Heart right ventricle (tissue), 16 donors: ENCODE measurements at regions of chrX and their contacts with region 1.

Region 1: GRCh38 chrX:41333744-41334259 is at the start of gene DDX3X:
- DNase-seq: peak; percentile 82
- ATAC-seq: peak; percentile 83 to 92 (median 89)
- H3K4me3 ChIP-seq: peak within 1 kb of the TSS; percentile 77 to 100 (median 94)
- H3K27ac ChIP-seq: peak within 1 kb of the TSS; percentile 98 to 100 (median 100)
- H3K4me1 ChIP-seq: peaks cover 0 to 61% (median 27%) of the 10 kb centered on the region in 9 donors
- H3K27me3 ChIP-seq: no peaks in the 10 kb centered on the region
- CTCF ChIP-seq: peak in 5 of 9 donors; percentile 8 to 27 (median 20)
- total RNA-seq, gene DDX3X: 143 to 247 (median 162) TPM

Region 2: DNA sequence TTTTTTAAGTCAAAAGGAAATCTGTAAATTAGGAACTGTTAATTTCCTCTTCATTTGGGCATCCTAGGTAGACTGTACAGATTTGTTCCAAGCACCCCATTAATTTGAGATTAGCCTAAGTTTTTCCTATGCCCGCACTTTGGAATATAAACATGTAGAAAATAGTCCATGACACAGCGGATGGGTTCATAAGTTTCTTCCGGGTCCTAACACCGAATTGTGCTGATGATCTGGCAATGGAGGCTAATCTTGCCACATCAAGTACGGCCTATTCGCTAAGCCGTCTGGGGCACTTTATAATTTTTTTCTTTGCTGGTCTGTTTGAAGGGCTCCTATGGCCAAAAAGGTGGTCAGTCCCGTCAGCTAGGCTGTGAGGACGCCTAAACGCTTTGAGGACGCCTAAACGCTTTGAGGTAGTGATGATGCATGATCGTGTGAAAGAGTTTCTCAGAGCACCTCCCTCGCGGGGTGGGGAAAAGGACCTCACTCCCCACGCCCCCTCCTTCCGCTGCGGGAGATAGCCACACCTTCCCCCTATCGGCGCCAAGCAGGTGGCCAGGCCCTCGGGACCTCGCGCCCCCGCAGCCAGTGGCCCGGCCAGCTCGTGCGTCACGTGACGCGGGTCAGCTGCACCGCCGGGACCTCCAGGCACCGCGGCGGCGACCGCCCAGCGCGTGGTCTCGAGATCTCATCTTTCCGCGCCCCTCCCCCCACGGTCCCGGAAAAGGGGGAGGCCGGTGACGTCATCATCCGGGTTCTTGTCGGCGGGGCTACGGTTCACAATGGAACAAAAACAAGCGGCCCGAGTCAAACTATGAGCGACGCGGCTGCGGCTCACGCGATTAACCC is 249.5 kb before region 1 on chrX:
- intact Hi-C with region 1: loop called in 2 of 10 experiments (anchors 10 kb)
- DNase-seq: peak; percentile 95 to 96
- ATAC-seq: peak; percentile 81 to 93 (median 87)
- H3K4me3 ChIP-seq: peak overlapping the region; percentile 69 to 97 (median 83)
- H3K27ac ChIP-seq: peak overlapping the region; percentile 94 to 100 (median 98)
- H3K4me1 ChIP-seq: peaks cover 0 to 45% (median 11%) of the 10 kb centered on the region in 9 donors
- H3K27me3 ChIP-seq: peaks cover 0 to 93% (median 0%) of the 10 kb centered on the region in 7 donors
- CTCF ChIP-seq: no peak

Region 3: GRCh38 chrX:41180194-41180908 is 153.5 kb before region 1 on chrX:
- intact Hi-C with region 1: loop called in 1 of 10 experiments (anchors 10 kb)
- DNase-seq: peak in 1 of 2 donors; percentile 10
- ATAC-seq: no peak
- H3K4me3 ChIP-seq: no peak overlapping the region
- H3K27ac ChIP-seq: no peak overlapping the region
- H3K4me1 ChIP-seq: peaks cover 0 to 13% (median 6%) of the 10 kb centered on the region in 9 donors
- H3K27me3 ChIP-seq: no peaks in the 10 kb centered on the region
- CTCF ChIP-seq: peak in 8 of 9 donors; percentile 37 to 81 (median 66)

Region 4: GRCh38 chrX:41275661-41276609 is 57.9 kb before region 1 on chrX:
- intact Hi-C with region 1: loop called in 1 of 10 experiments (anchors 10 kb)
- DNase-seq: peak; percentile 64 to 66
- ATAC-seq: peak; percentile 77 to 95 (median 92)
- H3K4me3 ChIP-seq: peak overlapping the region; percentile 38 to 68 (median 56)
- H3K27ac ChIP-seq: peak overlapping the region in 6 of 10 donors; percentile 2 to 60 (median 49)
- H3K4me1 ChIP-seq: peaks cover 0 to 19% (median 0%) of the 10 kb centered on the region in 9 donors
- H3K27me3 ChIP-seq: peaks cover 0 to 49% (median 0%) of the 10 kb centered on the region in 7 donors
- CTCF ChIP-seq: peak; percentile 11 to 64 (median 53)

Region 5: GRCh38 chrX:41441934-41442823 is 108.4 kb after region 1 on chrX:
- intact Hi-C with region 1: loop called in 6 of 10 experiments (anchors 2 to 10 kb)
- DNase-seq: peak; percentile 79 to 83
- ATAC-seq: peak; percentile 93 to 97 (median 96)
- H3K4me3 ChIP-seq: peak overlapping the region in 8 of 10 donors; percentile 26 to 58 (median 44)
- H3K27ac ChIP-seq: peak overlapping the region; percentile 17 to 90 (median 76)
- H3K4me1 ChIP-seq: peaks cover 0 to 7% (median 3%) of the 10 kb centered on the region in 9 donors
- H3K27me3 ChIP-seq: peaks cover 0 to 9% (median 0%) of the 10 kb centered on the region in 7 donors
- CTCF ChIP-seq: peak; percentile 22 to 76 (median 61)

Region 6: DNA sequence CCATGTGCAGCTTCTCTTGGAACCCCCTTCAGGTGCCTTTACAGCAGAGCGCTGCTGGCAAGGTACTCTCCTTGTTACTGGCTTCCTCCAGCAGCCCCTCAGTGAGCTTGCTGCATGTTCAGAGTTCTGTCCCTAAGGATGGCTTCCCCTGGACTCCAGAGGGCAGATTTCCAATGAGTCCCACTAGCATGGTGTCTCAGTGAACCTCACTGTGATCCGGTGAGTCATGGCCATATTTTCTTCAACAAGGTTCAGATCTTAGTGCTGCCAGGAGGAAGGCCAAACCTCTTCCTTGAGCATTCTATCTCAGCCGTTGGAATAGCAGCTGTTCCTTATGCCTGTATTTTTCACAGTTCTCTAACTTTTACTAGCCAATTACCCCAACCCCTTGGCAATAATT is 490.7 kb after region 1 on chrX:
- intact Hi-C with region 1: no loop called
- DNase-seq: peak in 1 of 2 donors; percentile 2
- ATAC-seq: no peak
- H3K4me3 ChIP-seq: no peak overlapping the region
- H3K27ac ChIP-seq: no peak overlapping the region
- H3K4me1 ChIP-seq: no peaks in the 10 kb centered on the region
- H3K27me3 ChIP-seq: peaks cover 0 to 7% (median 0%) of the 10 kb centered on the region in 7 donors
- CTCF ChIP-seq: no peak

Region 7: GRCh38 chrX:42028109-42028508 is 694.3 kb after region 1 on chrX:
- intact Hi-C with region 1: no loop called
- DNase-seq: no peak
- ATAC-seq: no peak
- H3K4me3 ChIP-seq: no peak overlapping the region
- H3K27ac ChIP-seq: no peak overlapping the region
- H3K4me1 ChIP-seq: no peaks in the 10 kb centered on the region
- H3K27me3 ChIP-seq: peaks cover 0 to 12% (median 0%) of the 10 kb centered on the region in 7 donors
- CTCF ChIP-seq: no peak